Activated T-helper 1 cell treated with anti-CD3 and anti-CD28 coated beads, Interleukin-12 subunit alpha, Interleukin-12 subunit beta, Interleukin-2, Interleukin-4 antibody, amounts not matched to agents 30 ng/mL and 10 ng/mL and 1 ng/mL, durations not matched to agents 14 hours and 24 hours and 36 hours (primary cell): ENCODE measurements at regions of chr5 and their contacts with region 1.

Region 1: GRCh38 chr5:149035372-149035790 is 27.5 kb downstream of the SH3TC2 start:
- DNase-seq: peak; percentile 41
- H3K4me3 Mint-ChIP-seq: no peak overlapping the region
- H3K27ac Mint-ChIP-seq: no peak overlapping the region
- H3K4me1 Mint-ChIP-seq: peaks cover 39% of the 10 kb centered on the region
- H3K27me3 Mint-ChIP-seq: peaks cover 5% of the 10 kb centered on the region

Region 2: DNA sequence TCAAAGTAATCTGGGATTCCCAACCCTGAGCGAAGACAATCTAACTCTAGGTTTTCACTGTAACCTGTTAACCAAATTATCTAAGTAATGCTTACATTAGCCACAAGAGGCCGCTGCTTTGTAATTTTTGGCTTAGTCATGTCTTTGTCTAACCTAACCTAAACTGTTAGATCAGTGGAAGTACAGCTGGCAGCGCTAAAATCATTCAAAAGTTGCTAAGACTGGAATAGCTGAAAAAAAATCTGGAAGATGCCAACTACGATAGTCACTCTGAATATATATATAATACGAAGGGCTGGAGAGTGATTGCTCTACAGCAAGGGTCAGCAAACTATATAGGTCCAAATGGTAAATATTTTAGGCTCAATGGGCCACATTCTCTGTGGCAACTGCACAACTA is 591.4 kb before region 1 on chr5:
- intact Hi-C with region 1: loop called (anchors 2 kb)
- DNase-seq: peak; percentile 6
- H3K4me3 Mint-ChIP-seq: no peak overlapping the region
- H3K27ac Mint-ChIP-seq: no peak overlapping the region
- H3K4me1 Mint-ChIP-seq: no peaks in the 10 kb centered on the region
- H3K27me3 Mint-ChIP-seq: peaks cover 3% of the 10 kb centered on the region

Region 3: DNA sequence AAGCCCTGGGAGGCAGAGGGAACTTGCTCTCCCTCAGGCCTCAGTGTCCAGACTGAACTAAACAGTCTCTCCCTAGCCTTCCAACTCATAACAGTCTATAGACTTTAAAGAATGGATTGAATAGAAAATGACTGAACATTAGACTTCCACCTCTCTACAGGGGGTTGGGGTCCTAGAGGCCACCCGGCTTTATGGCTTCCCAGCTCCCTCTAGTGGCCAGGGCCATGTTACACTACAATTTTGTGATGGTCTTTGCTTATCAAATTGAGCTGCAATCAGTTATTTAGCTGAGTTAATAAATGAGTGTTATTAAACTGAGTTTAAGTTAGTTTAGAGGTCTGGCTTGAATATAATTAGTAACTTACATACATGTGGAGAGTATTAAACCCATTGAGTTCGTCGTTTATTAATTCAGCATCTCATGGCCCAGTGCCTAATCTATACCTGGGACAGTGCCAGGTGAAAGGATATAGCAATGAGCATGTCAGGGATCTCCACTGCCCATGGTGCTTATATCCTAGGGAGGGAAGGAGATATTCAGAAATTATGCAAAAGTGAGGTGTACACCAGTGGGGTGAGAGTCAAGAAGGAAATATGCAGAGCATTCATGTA is 77.7 kb before region 1 on chr5:
- intact Hi-C with region 1: loop called (anchors 1 kb)
- DNase-seq: no peak
- H3K4me3 Mint-ChIP-seq: no peak overlapping the region
- H3K27ac Mint-ChIP-seq: no peak overlapping the region
- H3K4me1 Mint-ChIP-seq: no peaks in the 10 kb centered on the region
- H3K27me3 Mint-ChIP-seq: peaks cover 7% of the 10 kb centered on the region

Region 4: DNA sequence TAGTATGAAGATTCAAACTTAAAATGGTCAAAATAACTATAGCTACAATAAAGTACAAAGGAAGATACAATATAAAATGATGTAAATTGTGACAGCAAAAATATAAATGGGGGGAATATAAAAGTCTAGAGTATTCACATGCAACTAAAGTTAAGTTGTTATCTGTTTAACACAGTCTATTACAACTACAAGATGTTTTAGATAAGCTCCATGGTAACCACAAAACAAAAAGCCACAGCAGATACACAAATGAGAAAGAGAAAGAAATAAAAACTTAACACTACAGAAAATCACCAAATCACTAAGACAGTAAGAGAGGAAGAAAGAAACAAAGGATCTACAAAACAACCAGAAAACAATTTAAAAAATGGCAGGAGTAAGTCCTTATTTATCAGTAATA is 44.5 kb after region 1 on chr5:
- intact Hi-C with region 1: loop called (anchors 2 kb)
- DNase-seq: no peak
- H3K4me3 Mint-ChIP-seq: no peak overlapping the region
- H3K27ac Mint-ChIP-seq: no peak overlapping the region
- H3K4me1 Mint-ChIP-seq: no peaks in the 10 kb centered on the region
- H3K27me3 Mint-ChIP-seq: peaks cover 7% of the 10 kb centered on the region

Region 5: GRCh38 chr5:150092159-150092787 is 1056.9 kb after region 1 on chr5:
- intact Hi-C with region 1: no loop called
- DNase-seq: no peak
- H3K4me3 Mint-ChIP-seq: no peak overlapping the region
- H3K27ac Mint-ChIP-seq: peak overlapping the region; percentile 44
- H3K4me1 Mint-ChIP-seq: peaks cover 14% of the 10 kb centered on the region
- H3K27me3 Mint-ChIP-seq: peaks cover 37% of the 10 kb centered on the region